Activated T-helper 1 cell treated with anti-CD3 and anti-CD28 coated beads, Interleukin-12 subunit alpha, Interleukin-12 subunit beta, Interleukin-2, Interleukin-4 antibody, amounts not matched to agents 30 ng/mL and 10 ng/mL and 1 ng/mL, durations not matched to agents 14 hours and 24 hours and 36 hours (primary cell): ENCODE measurements at regions of chr17 and their contacts with region 1.

Region 1: DNA sequence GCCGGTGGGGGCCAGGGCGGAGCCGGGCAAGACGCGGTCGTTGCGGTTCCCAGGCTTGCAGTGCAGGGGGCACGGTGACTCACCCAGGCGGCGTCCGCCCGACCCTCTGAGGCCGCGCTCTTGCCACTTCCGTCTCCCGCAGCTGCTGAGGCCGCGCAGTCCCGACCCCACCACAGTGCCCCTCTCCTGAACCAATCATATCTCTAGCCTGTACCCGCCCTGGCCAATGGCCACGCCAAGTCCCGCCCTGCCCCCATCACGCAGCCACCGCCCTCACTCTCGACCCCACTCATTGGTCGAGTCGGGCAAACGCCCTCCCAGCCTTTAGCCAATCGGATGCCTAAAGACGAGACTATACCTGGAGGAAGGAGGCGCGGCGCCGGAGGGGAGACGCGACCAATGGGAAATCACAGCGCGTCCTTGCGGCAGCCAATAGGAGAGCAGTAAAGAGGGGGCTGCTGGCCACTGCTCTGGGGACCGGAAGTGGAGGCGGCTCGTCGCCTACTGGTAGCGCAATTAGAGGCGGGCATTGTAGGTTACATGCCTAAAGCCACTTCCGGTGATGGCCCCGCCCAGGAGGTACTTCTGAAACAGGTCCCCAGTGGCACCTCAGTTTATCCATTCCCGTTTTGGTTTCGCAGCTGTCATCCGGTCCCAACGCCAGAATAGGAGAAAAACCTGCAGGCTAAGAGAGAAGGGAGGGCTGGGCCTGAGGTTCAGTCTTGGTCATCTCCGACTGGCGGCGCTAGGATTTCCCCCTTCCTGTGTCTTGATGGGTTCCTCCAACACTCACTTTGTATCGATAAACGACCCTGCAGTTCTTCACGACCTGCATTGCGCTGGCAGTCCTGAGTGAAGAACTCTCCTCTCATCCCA is 3.5 kb upstream of the MTMR4 start:
- DNase-seq: peak; percentile 100
- H3K4me3 Mint-ChIP-seq: peak overlapping the region; percentile 86
- H3K27ac Mint-ChIP-seq: peak overlapping the region; percentile 91
- H3K4me1 Mint-ChIP-seq: peaks cover 32% of the 10 kb centered on the region
- H3K27me3 Mint-ChIP-seq: no peaks in the 10 kb centered on the region

Region 2: DNA sequence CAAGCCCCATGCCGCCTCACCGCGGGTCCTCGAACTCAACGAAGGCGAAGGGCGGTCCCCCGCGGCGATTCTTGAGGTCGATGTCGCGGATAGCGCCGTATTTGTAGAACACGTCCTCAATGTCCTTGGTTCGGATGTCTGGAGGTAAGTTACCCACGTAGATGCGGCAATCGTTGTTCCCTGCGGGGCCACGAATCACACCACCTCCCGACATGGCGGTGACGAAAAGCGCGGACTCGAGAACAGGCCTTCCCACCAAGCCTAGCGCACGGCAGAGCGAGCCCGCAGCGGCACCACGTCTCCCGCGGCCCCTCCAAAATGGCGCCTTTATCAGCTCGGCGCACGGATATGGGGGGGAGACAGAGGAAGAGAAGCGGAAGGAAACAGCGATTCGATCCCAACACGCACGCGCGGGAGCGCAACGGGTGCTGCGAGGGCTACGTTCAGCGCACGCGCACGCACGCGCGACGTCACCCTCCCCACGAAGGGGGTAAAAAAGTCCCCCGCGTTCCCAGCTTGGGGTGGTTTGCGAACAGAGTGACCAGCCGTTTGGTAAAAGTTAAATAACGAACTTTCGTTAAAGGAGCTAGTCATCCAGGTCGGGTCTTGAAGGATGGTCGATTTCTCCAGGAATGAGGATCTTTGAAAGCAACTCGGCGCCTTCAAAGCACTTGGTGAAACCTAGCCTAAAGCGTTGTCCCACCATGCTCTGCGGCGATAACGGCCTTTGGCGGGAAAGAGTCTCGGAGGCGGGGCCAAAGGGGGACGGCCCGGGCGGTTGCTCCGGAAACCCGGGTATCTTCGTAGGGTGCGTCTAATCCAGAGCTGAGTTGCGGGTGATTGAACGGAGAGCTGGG is 510.8 kb before region 1 on chr17 and contains the start of gene SRSF1:
- intact Hi-C with region 1: loop called (anchors 2 kb)
- DNase-seq: peak; percentile 97
- H3K4me3 Mint-ChIP-seq: peak within 1 kb of the TSS; percentile 99
- H3K27ac Mint-ChIP-seq: peak within 1 kb of the TSS; percentile 99
- H3K4me1 Mint-ChIP-seq: peaks cover 61% of the 10 kb centered on the region
- H3K27me3 Mint-ChIP-seq: no peaks in the 10 kb centered on the region
- total RNA-seq, gene SRSF1: 491 and 498 TPM in 2 replicates

Region 3: GRCh38 chr17:58329035-58329809 is 188.8 kb before region 1 on chr17:
- intact Hi-C with region 1: loop called (anchors 1 kb)
- DNase-seq: peak; percentile 81
- H3K4me3 Mint-ChIP-seq: peak overlapping the region; percentile 100
- H3K27ac Mint-ChIP-seq: peak overlapping the region; percentile 93
- H3K4me1 Mint-ChIP-seq: peaks cover 45% of the 10 kb centered on the region
- H3K27me3 Mint-ChIP-seq: peaks cover 2% of the 10 kb centered on the region

Region 4: DNA sequence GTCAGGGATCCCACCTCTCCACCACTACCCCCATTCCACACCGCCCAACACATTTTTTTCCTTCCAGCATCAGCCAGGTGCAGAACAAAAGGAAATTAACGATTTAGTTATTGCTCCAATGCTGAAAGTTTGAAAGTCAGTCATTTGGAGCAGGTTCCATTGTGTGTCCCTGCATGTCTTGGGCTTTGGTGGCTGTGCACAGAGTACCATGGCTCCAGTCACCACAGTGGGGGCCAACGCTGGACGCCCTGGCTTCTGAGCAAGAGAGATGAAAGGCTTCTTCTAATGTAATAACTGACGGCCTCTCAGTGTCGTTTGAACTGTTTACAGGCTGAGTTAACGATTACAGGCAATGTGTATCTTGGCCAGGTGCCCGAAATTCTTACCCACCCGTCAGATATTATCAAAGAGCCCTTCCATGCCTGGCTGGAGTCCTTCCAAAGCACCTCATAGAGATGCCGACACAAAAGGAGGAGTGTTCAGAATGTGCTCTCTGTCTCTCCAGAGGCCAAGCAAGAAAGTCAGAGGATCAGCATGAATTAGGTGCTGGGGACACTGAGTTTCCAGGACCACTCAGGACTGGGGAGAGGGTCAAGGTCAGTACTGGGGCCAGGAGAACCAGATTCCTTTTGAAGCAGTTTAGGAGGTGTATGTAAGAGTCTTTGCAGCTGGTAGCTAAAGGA is 126.5 kb before region 1 on chr17:
- intact Hi-C with region 1: no loop called
- DNase-seq: no peak
- H3K4me3 Mint-ChIP-seq: no peak overlapping the region
- H3K27ac Mint-ChIP-seq: no peak overlapping the region
- H3K4me1 Mint-ChIP-seq: peaks cover 7% of the 10 kb centered on the region
- H3K27me3 Mint-ChIP-seq: peaks cover 5% of the 10 kb centered on the region

Region 5: GRCh38 chr17:58531661-58532554 is 13.9 kb after region 1 on chr17:
- intact Hi-C with region 1: loop called (anchors 1 kb)
- DNase-seq: peak; percentile 67
- H3K4me3 Mint-ChIP-seq: peak overlapping the region; percentile 38
- H3K27ac Mint-ChIP-seq: no peak overlapping the region
- H3K4me1 Mint-ChIP-seq: peaks cover 6% of the 10 kb centered on the region
- H3K27me3 Mint-ChIP-seq: peaks cover 48% of the 10 kb centered on the region

Region 6: DNA sequence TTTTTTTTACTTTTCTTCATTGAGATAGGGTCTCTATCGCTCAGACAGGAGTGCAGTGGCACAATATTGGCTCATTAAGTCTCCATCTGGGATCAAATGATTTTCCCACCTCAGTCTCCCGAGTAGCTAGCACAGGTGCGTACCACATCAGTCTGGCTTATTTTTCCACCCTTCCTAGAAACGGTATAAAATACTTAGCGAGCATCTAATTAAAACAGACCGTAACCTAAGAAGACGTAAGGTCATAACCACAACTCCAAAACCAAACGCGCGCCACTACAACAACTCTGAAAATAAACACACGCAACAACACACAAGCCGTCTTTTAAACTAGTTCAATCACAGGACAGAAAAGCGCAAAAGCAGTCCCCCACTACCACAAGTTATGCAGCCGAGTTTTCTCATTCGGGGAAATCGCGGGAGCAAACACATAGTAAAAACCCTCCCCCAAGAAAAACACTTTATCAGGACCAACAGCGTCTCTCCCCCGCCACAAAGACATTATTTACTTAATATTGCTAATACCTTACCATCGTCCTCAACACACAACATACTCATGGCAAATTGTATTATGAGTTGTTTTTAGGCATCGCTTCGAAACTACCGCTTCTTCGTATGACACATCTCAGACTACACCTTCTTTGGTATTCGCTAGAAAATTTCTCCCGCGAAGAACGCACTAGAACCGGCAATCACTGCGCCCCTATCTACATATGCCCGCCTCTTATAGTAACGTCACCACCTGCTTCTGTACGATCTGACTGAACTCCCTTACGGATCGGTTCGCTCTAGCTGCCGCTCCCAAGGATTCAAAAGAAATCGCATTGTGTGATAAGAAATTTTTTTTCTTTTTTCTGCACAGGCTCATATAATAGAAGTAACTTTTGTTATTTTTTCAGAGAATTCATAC is 141.1 kb after region 1 on chr17:
- intact Hi-C with region 1: loop called (anchors 1 kb)
- DNase-seq: peak; percentile 74
- H3K4me3 Mint-ChIP-seq: peak overlapping the region; percentile 63
- H3K27ac Mint-ChIP-seq: peak overlapping the region; percentile 97
- H3K4me1 Mint-ChIP-seq: peaks cover 25% of the 10 kb centered on the region
- H3K27me3 Mint-ChIP-seq: peaks cover 7% of the 10 kb centered on the region

Region 7: DNA sequence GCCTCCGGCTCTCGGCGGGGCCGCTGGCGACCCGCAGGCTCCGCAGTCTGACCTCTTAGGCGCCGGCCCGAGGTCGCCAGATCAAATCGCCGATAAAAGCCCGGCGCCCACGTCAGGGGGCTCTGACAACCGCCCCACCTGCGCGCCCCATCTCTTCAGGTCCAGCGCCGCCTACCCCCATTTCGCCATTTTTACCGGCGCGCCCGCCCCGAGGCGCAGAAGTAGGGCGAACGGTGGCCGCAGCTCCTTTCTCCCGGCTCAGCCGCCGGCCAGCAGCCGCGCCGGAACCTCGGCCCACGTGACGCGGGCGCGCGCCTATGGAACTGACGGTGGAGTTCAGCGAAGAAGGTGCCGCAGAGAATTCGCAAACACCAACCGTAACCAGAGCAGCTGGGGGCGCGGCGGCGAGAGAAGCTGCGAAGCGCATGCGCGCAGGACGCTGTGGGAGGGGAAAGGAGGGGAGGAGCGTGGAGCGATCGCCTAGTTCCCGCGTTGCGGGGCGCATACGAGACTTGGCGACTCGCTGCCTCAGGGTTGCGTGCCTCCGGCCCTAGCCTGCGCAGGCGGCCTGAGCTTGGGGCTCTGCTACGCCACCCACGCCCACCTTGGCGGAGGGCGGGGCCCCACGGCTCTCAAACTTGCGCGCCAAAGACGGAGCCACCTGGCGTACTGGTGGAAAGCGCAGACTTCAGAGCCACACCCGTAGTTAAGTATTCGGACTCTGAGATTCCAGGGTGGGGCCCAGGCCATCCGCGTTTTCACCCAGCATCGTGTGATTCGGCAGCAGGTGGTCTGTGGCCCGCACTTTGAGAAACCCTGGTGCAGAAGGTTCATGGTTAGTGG is 588.7 kb after region 1 on chr17 and contains the start of gene TRIM37:
- intact Hi-C with region 1: loop called (anchors 1 kb)
- DNase-seq: peak; percentile 100
- H3K4me3 Mint-ChIP-seq: peak within 1 kb of the TSS; percentile 97
- H3K27ac Mint-ChIP-seq: peak within 1 kb of the TSS; percentile 90
- H3K4me1 Mint-ChIP-seq: peaks cover 66% of the 10 kb centered on the region
- H3K27me3 Mint-ChIP-seq: peaks cover 1% of the 10 kb centered on the region
- total RNA-seq, gene TRIM37: 27.5 and 27.7 TPM in 2 replicates